Panc1 (cell line): ENCODE measurements at regions of chr1 and their contacts with region 1.

Region 1: DNA sequence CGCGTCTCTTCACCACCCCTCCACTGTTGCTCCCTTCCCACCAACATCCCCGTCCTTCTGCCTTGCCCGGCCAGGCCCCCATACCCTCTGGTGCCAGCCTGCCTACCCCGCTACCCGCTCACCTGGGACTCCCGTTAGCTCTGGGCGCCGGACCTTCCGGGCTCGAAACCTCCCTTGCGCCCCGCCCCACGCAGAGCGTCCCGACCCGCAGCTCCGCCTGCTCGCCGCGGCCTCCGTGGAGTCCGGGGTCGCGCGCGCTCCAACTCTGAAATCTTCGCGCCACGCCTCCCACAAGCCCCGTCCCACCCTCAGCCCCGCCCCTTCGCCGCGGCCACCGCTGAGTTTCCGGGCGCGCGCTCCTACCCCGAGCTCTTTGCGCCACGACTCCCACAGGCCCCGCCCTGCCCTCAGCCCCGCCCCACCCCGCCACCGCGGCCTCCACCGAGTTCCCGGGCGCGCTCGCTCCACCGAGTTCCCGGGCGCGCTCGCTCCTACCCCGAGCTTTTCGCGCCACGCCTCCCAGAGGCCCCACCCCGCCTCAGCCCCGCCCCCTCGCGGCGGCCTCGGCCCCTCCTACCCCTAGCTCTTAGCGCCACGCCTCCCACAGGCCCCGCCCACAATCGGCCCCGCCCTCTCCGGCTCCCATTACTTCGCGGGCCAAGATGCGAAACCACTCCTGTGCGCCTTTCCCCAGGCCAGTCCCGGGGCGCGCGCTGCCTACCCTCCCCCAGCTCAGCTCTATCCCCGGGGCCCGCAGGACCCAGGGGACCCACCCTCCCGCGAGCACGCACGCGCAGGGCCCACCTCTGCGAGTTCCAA is at the start of gene IFT25:
- DNase-seq: peak; percentile 68
- ATAC-seq: peak; percentile 92
- H3K4me3 ChIP-seq: peak within 1 kb of the TSS; percentile 74 to 78
- H3K27ac ChIP-seq: peak within 1 kb of the TSS; percentile 85
- H3K4me1 ChIP-seq: peaks cover 26% of the 10 kb centered on the region
- H3K27me3 ChIP-seq: no peaks in the 10 kb centered on the region
- CTCF ChIP-seq: no peak
- total RNA-seq, gene IFT25: 42.9 TPM

Region 2: DNA sequence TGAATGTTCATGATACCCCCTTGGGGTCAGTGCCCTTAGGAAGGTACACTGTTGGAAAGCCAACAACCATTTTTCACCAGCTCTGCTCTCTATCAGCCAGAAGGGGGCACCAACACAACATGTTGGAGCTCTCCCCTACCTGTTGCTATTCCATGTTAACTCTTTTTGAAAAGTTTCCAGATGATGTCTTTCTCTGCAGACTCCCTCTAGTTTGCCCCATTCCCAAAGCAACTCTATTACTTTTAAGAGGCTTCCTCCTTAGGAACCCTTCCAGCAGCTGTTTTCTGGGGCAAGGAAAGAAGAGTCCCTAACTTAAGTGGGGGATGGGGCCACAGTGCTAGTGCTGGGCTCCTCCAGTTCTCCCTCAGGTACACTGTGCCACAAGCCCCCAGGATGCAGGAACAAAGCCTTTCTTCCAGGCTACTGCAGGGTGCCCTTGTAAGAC is 84.7 kb before region 1 on chr1:
- CTCF ChIA-PET with region 1: interaction called, 4 read pairs
- POLR2A ChIA-PET with region 1: no interaction called
- in situ Hi-C with region 1: no loop called
- intact Hi-C with region 1: loop called (anchors 5 kb)
- DNase-seq: no peak
- ATAC-seq: peak; percentile 93
- H3K4me3 ChIP-seq: no peak overlapping the region
- H3K27ac ChIP-seq: no peak overlapping the region
- H3K4me1 ChIP-seq: no peaks in the 10 kb centered on the region
- H3K27me3 ChIP-seq: no peaks in the 10 kb centered on the region
- CTCF ChIP-seq: peak; percentile 91

Region 3: DNA sequence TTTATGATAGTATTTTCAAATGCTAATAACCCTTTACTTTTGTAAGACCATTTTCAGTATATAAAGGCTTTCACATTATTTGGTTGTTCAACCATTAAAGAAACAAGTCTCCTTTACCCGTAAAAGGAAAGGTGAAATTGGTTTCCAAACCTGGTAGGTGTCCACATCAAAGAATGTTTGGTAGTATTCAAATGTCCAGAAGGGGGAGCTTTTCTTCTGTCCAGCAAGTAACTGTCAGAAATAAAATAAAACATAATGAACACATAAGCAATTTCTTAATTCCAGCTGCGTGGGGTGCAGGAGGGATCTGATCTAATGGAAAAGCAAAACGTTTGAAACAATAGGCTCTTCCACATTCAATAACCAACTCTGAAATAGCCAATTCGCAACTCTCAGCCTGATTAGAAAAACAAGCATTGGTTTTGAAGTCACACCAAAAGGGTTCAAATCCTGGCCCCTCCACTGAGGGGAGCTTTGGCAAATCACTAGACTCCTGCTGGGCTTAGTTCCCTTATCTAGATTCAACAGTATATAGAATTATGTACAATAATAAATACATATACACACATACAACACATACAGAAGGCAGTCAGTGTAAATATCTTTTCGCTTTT is 67.0 kb before region 1 on chr1:
- CTCF ChIA-PET with region 1: interaction called, 9 read pairs
- POLR2A ChIA-PET with region 1: no interaction called
- in situ Hi-C with region 1: no loop called
- intact Hi-C with region 1: loop called (anchors 2 kb)
- DNase-seq: peak; percentile 35
- ATAC-seq: 0 out of 2 replicates have a peak, but pooled peaks have one; percentile 60
- H3K4me3 ChIP-seq: no peak overlapping the region
- H3K27ac ChIP-seq: no peak overlapping the region
- H3K4me1 ChIP-seq: no peaks in the 10 kb centered on the region
- H3K27me3 ChIP-seq: no peaks in the 10 kb centered on the region
- CTCF ChIP-seq: peak; percentile 82

Region 4: DNA sequence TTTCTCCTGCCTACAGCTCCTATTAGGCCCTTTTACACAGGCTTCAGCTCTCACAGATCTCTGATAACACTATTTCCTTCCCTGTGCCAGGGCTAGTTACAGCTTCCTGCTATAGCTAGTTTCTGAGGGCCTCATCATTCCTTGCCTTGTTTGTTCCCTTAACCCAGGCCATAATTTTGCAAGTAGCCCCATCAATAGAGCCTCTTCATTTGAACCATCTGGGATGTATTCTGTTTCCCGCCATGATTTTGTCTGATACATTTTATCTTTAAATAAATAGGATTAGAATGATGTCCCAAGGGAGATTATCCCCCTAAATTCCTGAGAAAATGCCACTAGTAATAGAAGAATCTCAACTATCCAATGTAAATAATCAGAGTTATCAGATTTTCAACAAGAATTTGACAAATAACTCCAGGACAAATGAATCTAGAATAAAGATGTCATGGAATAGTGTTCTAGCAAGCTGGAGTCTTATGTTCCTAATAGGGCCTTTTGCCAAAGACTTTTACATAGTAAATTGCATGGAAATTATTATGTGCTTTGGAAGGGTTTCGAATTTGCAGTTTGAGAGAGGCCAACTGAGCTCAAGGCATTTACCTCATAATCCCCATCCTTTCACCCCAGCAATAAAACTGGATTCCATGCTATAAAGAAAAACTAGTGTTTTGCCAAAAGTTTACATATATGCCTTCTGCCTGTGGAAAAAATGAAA is 16.2 kb before region 1 on chr1:
- CTCF ChIA-PET with region 1: no interaction called
- POLR2A ChIA-PET with region 1: interaction called, 15 read pairs
- in situ Hi-C with region 1: no loop called
- intact Hi-C with region 1: no loop called
- DNase-seq: no peak
- ATAC-seq: no peak
- H3K4me3 ChIP-seq: no peak overlapping the region
- H3K27ac ChIP-seq: no peak overlapping the region
- H3K4me1 ChIP-seq: no peaks in the 10 kb centered on the region
- H3K27me3 ChIP-seq: no peaks in the 10 kb centered on the region
- CTCF ChIP-seq: no peak

Region 5: DNA sequence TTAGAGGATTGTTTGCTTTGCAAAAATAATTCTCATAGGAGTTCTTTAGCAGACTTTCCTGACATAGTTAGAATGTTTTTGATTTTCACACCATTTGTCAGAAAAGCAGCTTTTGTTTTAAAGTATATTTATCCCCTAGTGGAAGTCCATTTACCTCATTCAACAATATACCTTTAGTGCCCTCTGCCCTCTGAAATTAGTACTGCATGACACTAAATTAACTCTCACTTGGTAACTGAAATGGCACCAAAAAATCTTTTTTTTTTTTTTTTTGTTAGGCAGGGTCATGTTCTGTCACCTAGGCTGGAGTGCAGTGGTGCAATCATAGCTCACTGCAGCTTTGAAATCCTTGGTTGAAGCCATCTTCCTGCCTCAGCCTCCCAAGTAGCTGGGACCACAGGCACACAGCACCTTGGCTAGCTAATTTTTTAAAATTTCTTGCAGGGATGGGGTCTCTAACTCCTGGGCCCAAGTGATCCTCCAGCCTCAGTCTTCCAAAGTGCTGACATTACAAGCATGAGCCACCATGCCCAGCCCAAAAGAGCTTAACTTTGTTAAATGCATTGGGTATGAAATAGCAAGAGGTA is 14.1 kb after region 1 on chr1:
- CTCF ChIA-PET with region 1: interaction called, 13 read pairs
- POLR2A ChIA-PET with region 1: no interaction called
- in situ Hi-C with region 1: no loop called
- intact Hi-C with region 1: no loop called
- DNase-seq: no peak
- ATAC-seq: peak; percentile 73; the same call in 1 of the 2 replicates
- H3K4me3 ChIP-seq: no peak overlapping the region
- H3K27ac ChIP-seq: no peak overlapping the region
- H3K4me1 ChIP-seq: peaks cover 6% of the 10 kb centered on the region
- H3K27me3 ChIP-seq: no peaks in the 10 kb centered on the region
- CTCF ChIP-seq: peak; percentile 67

Region 6: GRCh38 chr1:54070171-54070837 is 124.7 kb after region 1 on chr1:
- CTCF ChIA-PET with region 1: interaction called, 10 read pairs
- POLR2A ChIA-PET with region 1: interaction called, 3 read pairs
- in situ Hi-C with region 1: no loop called
- intact Hi-C with region 1: no loop called
- DNase-seq: no peak
- ATAC-seq: peak; percentile 96
- H3K4me3 ChIP-seq: no peak overlapping the region
- H3K27ac ChIP-seq: no peak overlapping the region
- H3K4me1 ChIP-seq: no peaks in the 10 kb centered on the region
- H3K27me3 ChIP-seq: no peaks in the 10 kb centered on the region
- CTCF ChIP-seq: peak; percentile 77

Region 7: GRCh38 chr1:54579337-54579781 is 633.7 kb after region 1 on chr1:
- CTCF ChIA-PET with region 1: no interaction called
- POLR2A ChIA-PET with region 1: interaction called, 11 read pairs
- in situ Hi-C with region 1: no loop called
- intact Hi-C with region 1: no loop called
- DNase-seq: no peak
- ATAC-seq: no peak
- H3K4me3 ChIP-seq: no peak overlapping the region
- H3K27ac ChIP-seq: no peak overlapping the region
- H3K4me1 ChIP-seq: no peaks in the 10 kb centered on the region
- H3K27me3 ChIP-seq: no peaks in the 10 kb centered on the region
- CTCF ChIP-seq: no peak